Activated B cell treated with CpG ODN at 0.5 μM for 24 hours (primary cell): ENCODE measurements at regions of chr12 and their contacts with region 1.

Region 1: GRCh38 chr12:3034067-3034750 is 43.0 kb upstream of the TSPAN9 start:
- DNase-seq: no peak
- ATAC-seq: peak; percentile 82
- H3K4me3 Mint-ChIP-seq: no peak overlapping the region
- H3K27ac Mint-ChIP-seq: no peak overlapping the region
- H3K4me1 Mint-ChIP-seq: no peaks in the 10 kb centered on the region
- H3K27me3 Mint-ChIP-seq: no peaks in the 10 kb centered on the region
- CTCF ChIP-seq: no peak

Region 2: DNA sequence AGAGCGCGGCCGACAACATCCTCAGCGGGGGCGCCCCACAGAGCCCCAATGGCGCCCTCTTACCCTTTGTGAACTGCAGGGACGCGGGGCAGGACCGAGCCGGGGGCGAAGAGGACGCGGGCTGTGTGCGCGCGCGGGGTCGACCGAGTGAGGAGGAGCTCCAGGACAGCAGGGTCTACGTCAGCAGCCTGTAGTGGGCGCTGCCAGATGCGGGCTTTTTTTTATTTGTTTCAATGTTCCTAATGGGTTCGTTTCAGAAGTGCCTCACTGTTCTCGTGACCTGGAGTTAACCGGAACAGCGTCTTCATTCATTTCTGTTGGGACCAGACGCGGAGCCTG is 343.2 kb before region 1 on chr12:
- CTCF ChIA-PET with region 1: no interaction called
- POLR2A ChIA-PET with region 1: no interaction called
- intact Hi-C with region 1: loop called (anchors 10 kb)
- DNase-seq: no peak
- ATAC-seq: peak; percentile 78
- H3K4me3 Mint-ChIP-seq: peak overlapping the region; percentile 84
- H3K27ac Mint-ChIP-seq: peak overlapping the region; percentile 59
- H3K4me1 Mint-ChIP-seq: peaks cover 23% of the 10 kb centered on the region
- H3K27me3 Mint-ChIP-seq: peaks cover 19% of the 10 kb centered on the region
- CTCF ChIP-seq: no peak

Region 3: GRCh38 chr12:2722806-2723205 is 311.4 kb before region 1 on chr12:
- CTCF ChIA-PET with region 1: no interaction called
- POLR2A ChIA-PET with region 1: no interaction called
- intact Hi-C with region 1: no loop called
- DNase-seq: no peak
- ATAC-seq: no peak
- H3K4me3 Mint-ChIP-seq: no peak overlapping the region
- H3K27ac Mint-ChIP-seq: no peak overlapping the region
- H3K4me1 Mint-ChIP-seq: no peaks in the 10 kb centered on the region
- H3K27me3 Mint-ChIP-seq: no peaks in the 10 kb centered on the region
- CTCF ChIP-seq: no peak

Region 4: DNA sequence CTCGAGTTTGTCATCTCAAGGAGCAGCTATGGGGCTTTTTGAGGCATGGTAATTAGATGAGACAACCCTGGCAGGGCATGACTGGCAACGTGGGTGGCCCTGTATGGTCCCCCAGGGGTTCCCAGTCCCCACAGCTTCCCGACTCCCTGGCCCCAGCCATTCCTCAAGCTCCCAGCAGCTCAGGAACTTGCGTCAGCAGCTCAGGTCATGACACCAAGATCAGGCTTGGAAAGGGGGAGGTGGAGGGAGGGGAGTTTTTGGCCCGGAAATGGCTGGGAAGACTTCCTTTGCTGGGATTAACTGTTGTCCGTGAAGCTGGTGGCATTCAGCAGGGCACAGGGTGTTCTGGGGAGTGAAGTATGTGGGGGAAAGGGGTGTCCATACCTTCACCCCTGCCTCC is 188.9 kb before region 1 on chr12:
- CTCF ChIA-PET with region 1: interaction called, 10 read pairs
- POLR2A ChIA-PET with region 1: no interaction called
- intact Hi-C with region 1: loop called (anchors 1 kb)
- DNase-seq: no peak
- ATAC-seq: no peak
- H3K4me3 Mint-ChIP-seq: no peak overlapping the region
- H3K27ac Mint-ChIP-seq: no peak overlapping the region
- H3K4me1 Mint-ChIP-seq: no peaks in the 10 kb centered on the region
- H3K27me3 Mint-ChIP-seq: no peaks in the 10 kb centered on the region
- CTCF ChIP-seq: no peak